ENCODE measurements at regions of chr12 and their contacts with region 1.

Region 1: GRCh38 chr12:104695453-104696148 is 238.9 kb downstream of the CHST11 start:
- DNase-seq: peak; percentile 97
- H3K4me3 Mint-ChIP-seq: peak overlapping the region; percentile 37
- H3K27ac Mint-ChIP-seq: peak overlapping the region; percentile 93
- H3K4me1 Mint-ChIP-seq: peaks cover 61% of the 10 kb centered on the region
- H3K27me3 Mint-ChIP-seq: no peaks in the 10 kb centered on the region

Region 2: GRCh38 chr12:104462931-104463339 is 232.7 kb before region 1 on chr12:
- CTCF ChIA-PET with region 1: interaction called, 4 read pairs
- intact Hi-C with region 1: loop called (anchors 1 kb)
- DNase-seq: peak; percentile 65
- H3K4me3 Mint-ChIP-seq: peak overlapping the region; percentile 49
- H3K27ac Mint-ChIP-seq: peak overlapping the region; percentile 84
- H3K4me1 Mint-ChIP-seq: peaks cover 75% of the 10 kb centered on the region
- H3K27me3 Mint-ChIP-seq: no peaks in the 10 kb centered on the region

Region 3: GRCh38 chr12:104494137-104494792 is 201.3 kb before region 1 on chr12:
- CTCF ChIA-PET with region 1: no interaction called
- intact Hi-C with region 1: loop called (anchors 1 kb)
- DNase-seq: peak; percentile 85
- H3K4me3 Mint-ChIP-seq: peak overlapping the region; percentile 52
- H3K27ac Mint-ChIP-seq: peak overlapping the region; percentile 70
- H3K4me1 Mint-ChIP-seq: peaks cover 82% of the 10 kb centered on the region
- H3K27me3 Mint-ChIP-seq: no peaks in the 10 kb centered on the region

Region 4: DNA sequence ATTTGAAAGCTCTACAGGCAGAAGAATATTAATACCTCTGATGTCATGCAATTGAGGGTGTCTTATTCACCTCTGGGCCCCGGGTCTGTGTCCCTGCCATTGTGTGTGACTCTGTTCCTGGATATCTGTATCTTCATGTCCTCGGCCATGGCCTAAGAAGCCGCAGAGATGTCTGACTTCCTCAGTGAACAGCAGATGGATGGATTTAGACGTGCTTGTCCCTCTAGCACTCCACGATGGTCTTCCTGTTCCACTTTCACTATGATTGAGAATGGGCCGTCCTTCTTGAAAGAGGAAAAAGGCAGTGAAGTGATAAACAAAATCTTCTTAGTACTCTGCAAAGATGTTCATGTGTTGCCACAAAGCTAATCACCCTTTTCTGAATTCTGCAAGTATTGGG is 45.1 kb after region 1 on chr12:
- CTCF ChIA-PET with region 1: no interaction called
- intact Hi-C with region 1: loop called (anchors 1 kb)
- DNase-seq: peak; percentile 49
- H3K4me3 Mint-ChIP-seq: peak overlapping the region; percentile 53
- H3K27ac Mint-ChIP-seq: peak overlapping the region; percentile 60
- H3K4me1 Mint-ChIP-seq: peaks cover 52% of the 10 kb centered on the region
- H3K27me3 Mint-ChIP-seq: no peaks in the 10 kb centered on the region

Region 5: DNA sequence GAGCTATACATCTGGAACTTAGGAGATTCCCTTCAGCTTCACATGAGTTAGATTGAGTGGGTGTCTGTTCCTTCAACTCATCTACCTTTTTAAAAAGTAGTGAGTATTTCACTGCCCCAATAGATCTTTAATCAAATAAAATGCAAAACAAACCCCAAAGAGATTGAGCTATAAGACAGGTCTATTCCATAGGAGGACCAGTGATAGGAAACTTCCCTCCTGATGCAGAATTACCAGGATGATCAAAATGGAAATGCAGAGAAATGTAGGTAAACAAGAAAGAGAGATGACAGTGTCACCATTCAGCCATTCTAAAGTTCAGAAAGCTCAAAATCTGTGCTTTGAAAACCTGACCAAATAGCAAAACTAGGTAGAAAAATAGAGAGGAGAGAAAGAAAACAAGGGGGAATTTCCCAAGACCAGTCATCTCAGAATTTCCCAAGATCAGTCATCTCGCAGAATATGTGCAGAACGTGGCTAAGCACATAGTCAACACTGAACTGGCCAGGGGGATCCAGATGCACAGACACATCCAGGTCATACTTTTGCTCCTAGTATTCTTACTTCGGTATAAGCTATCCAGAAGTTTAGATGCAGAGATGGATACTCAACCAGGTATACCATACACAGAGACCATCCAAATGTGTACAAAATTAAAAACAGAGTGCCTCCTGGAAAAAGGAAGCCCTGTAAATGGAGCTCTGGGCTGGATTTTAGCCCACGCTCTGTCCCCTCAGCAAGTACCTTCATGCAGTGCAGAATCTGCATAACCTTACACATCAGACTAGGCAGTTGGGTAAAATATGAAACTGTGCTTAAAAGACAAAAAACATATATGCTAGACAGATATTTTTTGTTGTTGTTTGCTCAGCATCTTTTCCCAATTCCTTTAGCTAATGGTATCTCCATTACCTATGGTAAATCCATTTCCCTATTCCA is 235.1 kb after region 1 on chr12:
- CTCF ChIA-PET with region 1: no interaction called
- intact Hi-C with region 1: loop called (anchors 2 kb)
- DNase-seq: peak; percentile 76
- H3K4me3 Mint-ChIP-seq: no peak overlapping the region
- H3K27ac Mint-ChIP-seq: peak overlapping the region; percentile 0
- H3K4me1 Mint-ChIP-seq: peaks cover 23% of the 10 kb centered on the region
- H3K27me3 Mint-ChIP-seq: no peaks in the 10 kb centered on the region

Measured in activated naive CD4-positive, alpha-beta T cell treated with anti-CD3 and anti-CD28 coated beads for 36 hours (primary cell).